ENCODE measurements at regions of chr20 and their contacts with region 1.

Region 1: GRCh38 chr20:35883778-35884540 is 70.3 kb downstream of the SCAND1 start:
- DNase-seq: peak; percentile 57
- H3K4me3 ChIP-seq: no peak overlapping the region
- H3K27ac ChIP-seq: peak overlapping the region; percentile 62 to 84 (median 74)
- H3K4me1 ChIP-seq: peaks cover 0 to 6% (median 2%) of the 10 kb centered on the region in 4 donors
- H3K27me3 ChIP-seq: no peaks in the 10 kb centered on the region
- CTCF ChIP-seq: peak; percentile 52 to 65 (median 53)
- EP300 ChIP-seq: no peak
- POLR2A ChIP-seq: no peak

Region 2: DNA sequence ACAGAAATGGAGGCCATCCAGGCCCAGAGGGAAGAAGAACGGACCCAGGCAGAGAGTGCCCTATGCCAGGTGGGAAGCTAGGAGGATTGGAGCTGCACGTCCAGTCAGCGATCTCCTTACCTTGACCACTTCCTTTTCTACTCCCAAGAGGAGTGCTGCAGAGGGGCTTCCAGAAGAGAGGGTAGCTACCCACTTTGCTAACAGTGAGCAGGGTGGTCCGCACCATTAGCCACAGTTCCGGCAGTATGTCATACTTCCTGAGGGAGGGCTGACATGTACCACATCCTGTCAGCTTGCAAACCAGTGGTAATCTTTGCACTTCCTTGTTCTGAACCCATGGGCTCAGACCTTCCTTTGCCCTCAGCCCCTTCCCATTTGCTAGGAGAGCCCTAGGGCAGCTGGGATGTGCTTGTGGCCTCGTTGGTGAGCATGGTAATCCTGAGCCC is 393.2 kb before region 1 on chr20:
- in situ Hi-C with region 1: loop called in 1 of 4 experiments (anchors 25 kb)
- intact Hi-C with region 1: no loop called
- DNase-seq: peak; percentile 47
- H3K4me3 ChIP-seq: peak overlapping the region in 3 of 4 donors; percentile 7 to 49 (median 29)
- H3K27ac ChIP-seq: peak overlapping the region; percentile 2 to 60 (median 34)
- H3K4me1 ChIP-seq: no peaks in the 10 kb centered on the region
- H3K27me3 ChIP-seq: no peaks in the 10 kb centered on the region
- CTCF ChIP-seq: no peak
- EP300 ChIP-seq: no peak
- POLR2A ChIP-seq: peak; percentile 40

Measured in transverse colon (tissue), 4 donors.